ENCODE measurements at regions of chr12 and their contacts with region 1.

Region 1: GRCh38 chr12:1932264-1932777 is 13.9 kb upstream of the CACNA2D4 start:
- DNase-seq: peak; percentile 52 to 87 (median 68)
- H3K4me3 ChIP-seq: no peak overlapping the region
- H3K27ac ChIP-seq: no peak overlapping the region
- H3K4me1 ChIP-seq: peaks cover 15 to 17% of the 10 kb centered on the region in 2 donors
- H3K27me3 ChIP-seq: no peaks in the 10 kb centered on the region
- CTCF ChIP-seq: no peak
- POLR2A ChIP-seq: peak in 1 of 2 donors; percentile 19

Region 2: DNA sequence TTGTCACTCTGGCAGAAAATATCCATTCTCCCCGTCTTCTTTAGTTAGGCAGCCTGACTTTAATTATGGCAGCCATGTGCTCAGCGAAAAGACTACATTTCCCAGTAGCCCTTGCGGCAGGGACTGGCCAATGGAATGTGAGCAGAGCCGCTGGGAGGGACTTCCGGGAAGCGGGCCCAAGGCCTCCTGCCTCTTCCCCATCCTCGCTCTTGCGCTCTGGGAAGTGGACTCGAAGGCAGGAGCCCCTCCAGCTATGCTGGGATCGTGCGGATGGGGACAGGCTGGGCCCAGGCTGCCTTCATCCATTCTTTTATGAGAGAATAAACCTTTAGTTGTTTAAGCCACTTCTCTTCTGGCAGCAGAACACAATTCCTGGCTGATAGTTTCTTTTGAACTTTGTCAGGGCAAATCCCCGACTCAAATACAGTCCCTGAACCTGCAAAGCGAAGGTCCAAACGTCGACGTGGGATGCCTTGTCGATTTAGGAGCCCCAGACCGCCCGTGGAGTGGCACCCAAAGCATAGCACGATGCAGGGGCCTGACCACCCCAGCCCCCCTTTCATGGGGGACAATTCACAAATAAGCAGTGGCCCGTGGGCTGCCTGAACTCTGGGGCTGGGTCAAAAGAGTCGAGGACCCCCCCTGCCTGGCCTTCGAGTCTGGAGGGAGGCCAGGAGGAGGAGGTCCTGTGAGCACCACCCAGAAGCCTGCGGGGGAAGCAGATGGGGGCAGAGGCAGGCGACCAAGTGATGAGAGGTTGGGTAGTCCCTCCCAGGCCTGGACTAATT is 127.6 kb before region 1 on chr12:
- intact Hi-C with region 1: loop called in 1 of 2 experiments (anchors 5 kb)
- DNase-seq: peak; percentile 86 to 97 (median 93)
- H3K4me3 ChIP-seq: no peak overlapping the region
- H3K27ac ChIP-seq: peak overlapping the region in 1 of 5 donors; percentile 10
- H3K4me1 ChIP-seq: peaks cover 0 to 3% of the 10 kb centered on the region in 2 donors
- H3K27me3 ChIP-seq: no peaks in the 10 kb centered on the region
- CTCF ChIP-seq: no peak
- POLR2A ChIP-seq: no peak

Region 3: DNA sequence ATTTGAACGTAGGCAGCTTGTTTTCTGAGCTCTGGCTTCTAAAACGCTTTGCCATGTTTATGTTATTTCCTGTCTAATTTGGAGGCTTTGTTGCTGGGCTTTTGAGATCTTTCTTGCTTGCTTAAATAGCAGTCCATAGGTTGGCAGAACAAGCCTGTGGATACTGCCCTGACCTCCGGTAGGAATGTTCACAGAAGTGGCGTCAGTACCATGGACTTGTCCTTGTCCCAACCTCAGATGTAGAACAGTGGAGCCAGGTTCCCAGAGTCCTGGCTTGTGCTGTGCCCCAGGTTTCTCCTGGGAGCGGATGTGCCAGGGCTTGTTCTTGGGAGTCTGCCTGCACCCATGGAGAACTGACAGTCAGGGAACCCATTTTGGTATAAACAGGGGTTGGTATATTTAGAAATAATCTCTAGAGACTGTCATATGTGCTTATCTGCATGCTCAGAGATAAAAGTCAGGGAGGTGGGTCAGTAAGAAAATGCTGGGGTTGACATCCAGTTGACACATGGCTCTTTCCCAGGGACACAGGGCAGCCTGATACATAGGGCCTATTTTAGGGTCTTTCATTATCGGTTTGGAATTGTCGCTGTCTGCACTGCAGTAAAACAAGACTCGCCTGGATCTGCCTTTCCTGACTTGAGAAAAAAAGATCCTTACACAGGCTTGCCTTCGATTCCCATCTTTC is 143.3 kb after region 1 on chr12:
- intact Hi-C with region 1: no loop called
- DNase-seq: no peak
- H3K4me3 ChIP-seq: no peak overlapping the region
- H3K27ac ChIP-seq: peak overlapping the region in 2 of 5 donors; percentile 11 to 26
- H3K4me1 ChIP-seq: no peaks in the 10 kb centered on the region
- H3K27me3 ChIP-seq: no peaks in the 10 kb centered on the region
- CTCF ChIP-seq: no peak
- POLR2A ChIP-seq: no peak